ENCODE measurements at regions of chr3 and their contacts with region 1.

Region 1: GRCh38 chr3:37456270-37456708 is 281.9 kb upstream of the LRRFIP2 start:
- DNase-seq: no peak
- ATAC-seq: peak in 2 of 4 donors; percentile 6 to 13
- H3K4me3 ChIP-seq: no peak overlapping the region
- H3K27ac ChIP-seq: no peak overlapping the region
- H3K4me1 ChIP-seq: peaks cover 0 to 2% (median 0%) of the 10 kb centered on the region in 3 donors
- H3K27me3 ChIP-seq: peaks cover 0 to 4% (median 0%) of the 10 kb centered on the region in 4 donors
- CTCF ChIP-seq: no peak

Region 2: DNA sequence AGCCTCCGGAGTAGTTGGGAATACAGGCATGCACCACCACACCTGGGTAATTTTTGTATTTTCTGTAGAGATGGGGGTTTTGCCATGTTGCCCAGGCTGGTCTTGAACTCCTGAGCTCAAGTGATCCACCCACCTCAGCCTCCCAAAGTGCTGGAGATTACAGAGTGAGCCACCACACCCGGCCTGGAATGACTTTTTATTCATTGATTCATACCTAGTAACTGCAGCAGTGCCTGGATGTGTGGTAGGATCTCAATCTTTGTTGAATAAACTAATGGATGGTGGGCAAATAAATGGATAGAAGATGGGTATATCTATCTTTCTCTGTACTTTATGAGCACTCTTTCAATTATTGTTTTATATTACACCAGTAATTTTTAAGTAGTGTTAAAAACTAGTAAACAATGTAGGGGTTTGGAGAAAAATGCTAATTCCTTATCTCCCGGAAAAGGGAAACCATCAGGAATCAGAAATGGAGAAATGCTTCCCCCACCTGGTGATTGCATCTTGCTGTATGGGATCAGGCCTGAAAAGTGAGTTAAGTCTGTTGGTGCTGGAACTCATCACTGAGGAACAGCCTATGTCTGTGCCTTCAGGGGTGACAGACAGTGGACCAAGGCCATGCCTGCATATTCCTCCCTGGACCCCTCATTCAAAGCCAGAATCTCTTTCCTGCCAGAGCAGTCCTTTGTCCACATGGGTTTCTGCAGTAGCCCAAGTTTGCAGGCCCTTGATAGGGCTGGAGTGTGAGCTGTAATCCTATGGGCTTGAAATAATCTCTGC is 244.4 kb after region 1 on chr3:
- intact Hi-C with region 1: loop called in 1 of 3 experiments (anchors 5 kb)
- DNase-seq: peak in 3 of 6 donors; percentile 12 to 23 (median 17)
- ATAC-seq: peak in 3 of 4 donors; percentile 67 to 87 (median 77)
- H3K4me3 ChIP-seq: no peak overlapping the region
- H3K27ac ChIP-seq: no peak overlapping the region
- H3K4me1 ChIP-seq: no peaks in the 10 kb centered on the region
- H3K27me3 ChIP-seq: no peaks in the 10 kb centered on the region
- CTCF ChIP-seq: peak in 3 of 4 donors; percentile 20 to 27 (median 22)